Lower leg skin (tissue), 4 donors: ENCODE measurements at regions of chr12 and their contacts with region 1.

Region 1: DNA sequence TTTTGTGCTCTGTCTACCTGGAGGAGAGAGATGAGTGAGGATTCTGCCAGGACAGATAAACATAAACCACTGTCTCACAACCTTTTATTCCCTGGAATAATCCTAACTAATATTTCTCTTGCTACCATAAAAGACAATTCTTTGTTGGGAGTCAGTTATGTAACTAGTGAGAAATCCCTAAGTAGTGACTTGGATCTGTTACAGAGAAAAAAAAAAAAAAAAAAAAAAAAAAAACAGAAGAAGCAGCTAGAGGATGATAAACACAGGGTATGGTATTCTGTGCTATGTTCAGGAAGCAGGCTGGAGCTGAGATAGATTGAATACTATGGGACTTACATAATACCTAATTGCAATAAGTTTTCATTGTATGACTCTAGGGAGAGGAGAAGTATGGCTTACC is 178.7 kb downstream of the CNTN1 start:
- DNase-seq: no peak
- H3K4me3 ChIP-seq: no peak overlapping the region
- CTCF ChIP-seq: no peak
- POLR2A ChIP-seq: no peak

Region 2: GRCh38 chr12:39919790-39920189 is 951.2 kb before region 1 on chr12:
- intact Hi-C with region 1: loop called (anchors 5 kb)
- DNase-seq: no peak
- H3K4me3 ChIP-seq: no peak overlapping the region
- CTCF ChIP-seq: no peak
- POLR2A ChIP-seq: no peak

Region 3: DNA sequence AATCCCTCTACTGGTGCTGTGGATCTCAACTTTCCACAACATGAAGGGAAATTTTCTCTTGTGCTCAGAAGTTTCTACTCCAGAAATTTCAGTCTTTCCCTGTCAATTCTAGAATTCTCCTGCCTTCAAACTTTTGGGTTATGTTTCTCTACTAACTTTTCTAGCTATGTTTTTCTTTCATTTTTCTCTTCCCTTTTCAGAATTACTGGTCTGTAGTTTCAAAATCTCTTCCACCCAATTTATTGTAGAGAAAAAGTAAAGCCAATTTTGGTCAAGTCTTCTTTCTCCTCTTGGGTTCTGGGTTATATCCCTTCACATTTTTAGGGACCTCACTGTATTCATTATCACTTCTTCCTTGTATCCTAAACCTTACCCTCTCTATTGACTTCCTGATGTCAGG is 159.9 kb before region 1 on chr12:
- intact Hi-C with region 1: no loop called
- DNase-seq: no peak
- H3K4me3 ChIP-seq: no peak overlapping the region
- CTCF ChIP-seq: no peak
- POLR2A ChIP-seq: no peak